Activated T-helper 1 cell treated with anti-CD3 and anti-CD28 coated beads, Interleukin-12 subunit alpha, Interleukin-12 subunit beta, Interleukin-2, Interleukin-4 antibody, amounts not matched to agents 30 ng/mL and 10 ng/mL and 1 ng/mL, durations not matched to agents 14 hours and 24 hours and 36 hours (primary cell): ENCODE measurements at regions of chr2 and their contacts with region 1.

Region 1: DNA sequence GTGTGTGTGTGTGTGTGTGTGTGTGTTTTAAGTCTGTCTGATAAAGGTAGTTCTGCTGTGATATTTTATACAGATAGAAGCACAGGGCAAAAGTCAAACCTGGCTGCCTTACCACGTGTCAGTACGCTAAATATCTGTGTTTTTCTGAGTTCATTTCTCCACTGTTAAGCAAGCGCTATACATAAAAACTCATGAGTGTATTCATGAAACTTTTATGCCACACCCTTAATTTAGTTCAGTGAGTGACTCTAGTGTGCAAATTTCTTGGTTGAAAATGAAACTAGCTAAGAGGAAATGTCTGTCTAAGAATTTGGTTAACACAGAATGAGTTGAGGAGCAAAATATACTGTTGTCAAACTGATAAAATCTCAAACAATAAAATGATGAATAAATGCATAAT is 11.2 kb downstream of the CASP10 start:
- DNase-seq: no peak
- H3K4me3 Mint-ChIP-seq: peak overlapping the region; percentile 38
- H3K27ac Mint-ChIP-seq: peak overlapping the region; percentile 57
- H3K4me1 Mint-ChIP-seq: peaks cover 65% of the 10 kb centered on the region
- H3K27me3 Mint-ChIP-seq: no peaks in the 10 kb centered on the region

Region 2: GRCh38 chr2:201100497-201100896 is 93.6 kb before region 1 on chr2:
- intact Hi-C with region 1: no loop called
- DNase-seq: no peak
- H3K4me3 Mint-ChIP-seq: no peak overlapping the region
- H3K27ac Mint-ChIP-seq: no peak overlapping the region
- H3K4me1 Mint-ChIP-seq: no peaks in the 10 kb centered on the region
- H3K27me3 Mint-ChIP-seq: no peaks in the 10 kb centered on the region

Region 3: DNA sequence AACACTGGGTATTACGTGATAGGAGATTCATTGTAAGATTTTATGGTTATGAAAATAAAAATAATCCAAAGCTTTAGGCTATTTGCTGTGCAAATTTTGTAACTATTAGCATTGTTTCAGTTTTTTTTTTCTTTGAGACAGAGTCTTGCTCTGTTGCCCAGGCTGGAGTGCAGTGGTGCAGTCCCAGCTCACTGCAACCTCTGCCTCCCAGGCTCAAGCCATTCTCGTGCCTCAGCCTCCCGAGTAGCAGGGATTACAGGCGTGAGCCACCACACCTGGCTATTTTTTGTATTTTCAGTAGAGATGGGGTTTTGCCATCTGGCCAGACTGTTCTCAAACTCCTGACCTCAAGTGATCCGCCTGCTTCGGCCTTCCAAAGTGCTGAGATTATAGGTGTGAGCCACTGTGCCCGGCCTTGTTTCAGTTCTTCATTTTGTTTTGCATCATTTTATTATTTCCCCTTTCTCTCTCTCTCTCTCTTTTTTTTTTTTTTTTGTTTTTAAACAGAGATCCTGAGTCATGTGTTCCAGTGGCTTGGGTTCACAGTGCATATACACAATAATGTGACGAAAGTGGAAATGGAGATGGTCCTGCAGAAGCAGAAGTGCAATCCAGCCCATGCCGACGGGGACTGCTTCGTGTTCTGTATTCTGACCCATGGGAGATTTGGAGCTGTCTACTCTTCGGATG is 14.6 kb after region 1 on chr2:
- intact Hi-C with region 1: loop called (anchors 1 kb)
- DNase-seq: no peak
- H3K4me3 Mint-ChIP-seq: no peak overlapping the region
- H3K27ac Mint-ChIP-seq: no peak overlapping the region
- H3K4me1 Mint-ChIP-seq: peaks cover 8% of the 10 kb centered on the region
- H3K27me3 Mint-ChIP-seq: no peaks in the 10 kb centered on the region

Region 4: GRCh38 chr2:201733544-201733943 is 539.4 kb after region 1 on chr2:
- intact Hi-C with region 1: no loop called
- DNase-seq: no peak
- H3K4me3 Mint-ChIP-seq: no peak overlapping the region
- H3K27ac Mint-ChIP-seq: no peak overlapping the region
- H3K4me1 Mint-ChIP-seq: peaks cover 6% of the 10 kb centered on the region
- H3K27me3 Mint-ChIP-seq: no peaks in the 10 kb centered on the region